Transverse colon (tissue), 4 donors: ENCODE measurements at regions of chr9 and their contacts with region 1.

Region 1: GRCh38 chr9:38346811-38347210 is 45.7 kb upstream of the ALDH1B1 start:
- DNase-seq: no peak
- H3K4me3 ChIP-seq: no peak overlapping the region
- H3K27ac ChIP-seq: no peak overlapping the region
- H3K4me1 ChIP-seq: no peaks in the 10 kb centered on the region
- H3K27me3 ChIP-seq: no peaks in the 10 kb centered on the region
- CTCF ChIP-seq: no peak
- EP300 ChIP-seq: no peak
- POLR2A ChIP-seq: no peak

Region 2: DNA sequence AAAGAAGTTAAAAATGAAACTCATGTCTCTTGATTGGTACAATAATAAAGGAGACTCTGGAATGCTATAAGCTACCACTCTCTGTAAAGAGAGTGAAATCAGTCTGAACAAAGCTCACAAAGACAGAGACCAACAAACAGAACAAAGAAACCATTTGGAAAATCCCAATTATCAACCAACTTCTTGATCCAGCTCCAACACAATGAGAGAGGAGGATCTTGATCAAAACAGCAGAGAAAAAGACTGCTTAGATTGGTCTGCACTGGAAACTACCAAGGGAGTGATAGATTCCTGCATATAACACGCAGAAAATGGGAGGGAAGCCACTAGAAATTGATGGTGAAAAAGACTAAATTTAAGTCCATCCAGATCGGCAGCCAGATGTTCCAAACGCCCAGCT is 1923.6 kb before region 1 on chr9:
- in situ Hi-C with region 1: no loop called
- intact Hi-C with region 1: no loop called
- DNase-seq: no peak
- H3K4me3 ChIP-seq: no peak overlapping the region
- H3K27ac ChIP-seq: no peak overlapping the region
- H3K4me1 ChIP-seq: peaks cover 0 to 14% (median 11%) of the 10 kb centered on the region in 4 donors
- H3K27me3 ChIP-seq: no peaks in the 10 kb centered on the region
- CTCF ChIP-seq: no peak
- EP300 ChIP-seq: no peak
- POLR2A ChIP-seq: no peak

Region 3: GRCh38 chr9:38284588-38285051 is 62.2 kb before region 1 on chr9:
- in situ Hi-C with region 1: loop called in 1 of 4 experiments (anchors 10 kb)
- intact Hi-C with region 1: no loop called
- DNase-seq: no peak
- H3K4me3 ChIP-seq: no peak overlapping the region
- H3K27ac ChIP-seq: no peak overlapping the region
- H3K4me1 ChIP-seq: no peaks in the 10 kb centered on the region
- H3K27me3 ChIP-seq: no peaks in the 10 kb centered on the region
- CTCF ChIP-seq: no peak
- EP300 ChIP-seq: no peak
- POLR2A ChIP-seq: no peak